GM23248 (cell line): ENCODE measurements at regions of chr15 and their contacts with region 1.

Region 1: GRCh38 chr15:47839233-47839825 is 122.0 kb downstream of the SEMA6D start:
- DNase-seq: no peak
- H3K4me3 ChIP-seq: no peak overlapping the region
- H3K27ac ChIP-seq: no peak overlapping the region
- H3K4me1 ChIP-seq: no peaks in the 10 kb centered on the region
- H3K27me3 ChIP-seq: no peaks in the 10 kb centered on the region; the same call in 1 of the 2 replicates

Region 2: DNA sequence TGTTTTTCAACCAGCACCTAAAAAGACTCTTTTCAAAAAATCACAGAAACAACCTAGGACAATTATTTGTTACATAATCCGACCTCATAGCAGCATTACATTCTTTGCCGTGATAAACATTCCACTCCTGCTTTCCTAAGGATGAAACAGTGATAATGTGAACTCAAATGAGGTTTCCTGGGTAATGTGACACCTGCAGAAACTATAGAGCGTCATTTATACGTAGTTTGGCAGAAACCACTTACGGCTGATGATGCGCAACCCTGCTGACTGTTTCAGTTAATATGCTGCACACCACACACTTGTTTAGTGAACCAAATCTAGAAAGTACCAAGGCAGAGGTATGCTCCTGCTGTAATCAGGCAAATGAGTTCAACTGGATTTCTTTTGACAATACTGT is 66.2 kb before region 1 on chr15:
- in situ Hi-C with region 1: loop called (anchors 10 kb)
- DNase-seq: no peak
- H3K4me3 ChIP-seq: no peak overlapping the region
- H3K27ac ChIP-seq: no peak overlapping the region
- H3K4me1 ChIP-seq: no peaks in the 10 kb centered on the region
- H3K27me3 ChIP-seq: no peaks in the 10 kb centered on the region